Posterior vena cava (tissue), 2 donors: ENCODE measurements at regions of chr22 and their contacts with region 1.

Region 1: DNA sequence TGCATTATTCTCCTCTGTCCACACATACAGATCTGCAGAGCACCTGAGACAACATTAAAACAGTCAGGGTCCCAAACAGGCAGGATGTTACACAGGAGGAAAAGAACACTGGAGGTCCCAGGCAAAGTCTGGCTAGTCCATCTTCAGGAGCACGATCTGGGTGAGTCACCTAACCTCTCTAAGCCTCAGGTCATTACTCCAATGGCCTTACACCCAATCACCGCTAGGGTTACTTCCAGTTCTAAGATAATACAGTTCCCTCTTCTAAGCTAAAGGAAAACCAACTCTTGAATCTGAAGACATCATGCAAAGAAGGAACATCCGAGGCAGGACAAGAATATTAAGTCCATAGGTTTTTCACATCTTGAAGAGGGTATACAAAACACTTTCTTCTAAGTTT is 24.5 kb downstream of the ASCC2 start:
- DNase-seq: no peak

Region 2: DNA sequence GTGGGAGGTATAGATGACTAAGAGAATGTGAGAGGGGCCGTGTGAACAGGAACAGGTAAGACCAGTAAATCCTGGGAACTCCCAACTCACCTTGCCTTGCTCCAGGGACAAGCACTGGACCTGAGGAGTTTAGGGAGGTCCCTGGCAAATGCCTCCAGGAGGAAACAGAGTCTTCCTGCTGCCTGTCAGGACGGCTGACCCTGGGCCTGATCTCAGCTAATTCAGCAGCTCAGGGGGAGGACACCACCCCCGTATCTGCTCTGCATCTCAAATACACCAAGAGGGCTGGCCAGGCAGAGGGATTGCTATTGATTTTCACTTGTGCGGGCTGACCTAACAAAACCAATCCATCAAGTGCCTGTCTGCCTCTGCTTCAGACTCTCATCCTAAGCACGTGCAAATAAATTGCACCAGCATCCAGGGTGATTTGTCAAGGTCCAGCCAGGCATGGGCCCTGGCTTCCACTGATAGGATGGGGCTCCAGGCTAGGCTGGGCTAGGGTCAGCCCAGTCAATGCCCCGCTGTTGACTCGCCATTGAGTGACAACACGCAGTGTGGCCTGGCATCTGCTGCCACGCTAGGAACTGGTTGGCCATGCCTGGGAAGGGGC is 26.1 kb before region 1 on chr22:
- intact Hi-C with region 1: no loop called
- DNase-seq: no peak

Region 3: GRCh38 chr22:30212363-30212995 is 398.9 kb after region 1 on chr22:
- intact Hi-C with region 1: no loop called
- DNase-seq: peak; percentile 94

Region 4: DNA sequence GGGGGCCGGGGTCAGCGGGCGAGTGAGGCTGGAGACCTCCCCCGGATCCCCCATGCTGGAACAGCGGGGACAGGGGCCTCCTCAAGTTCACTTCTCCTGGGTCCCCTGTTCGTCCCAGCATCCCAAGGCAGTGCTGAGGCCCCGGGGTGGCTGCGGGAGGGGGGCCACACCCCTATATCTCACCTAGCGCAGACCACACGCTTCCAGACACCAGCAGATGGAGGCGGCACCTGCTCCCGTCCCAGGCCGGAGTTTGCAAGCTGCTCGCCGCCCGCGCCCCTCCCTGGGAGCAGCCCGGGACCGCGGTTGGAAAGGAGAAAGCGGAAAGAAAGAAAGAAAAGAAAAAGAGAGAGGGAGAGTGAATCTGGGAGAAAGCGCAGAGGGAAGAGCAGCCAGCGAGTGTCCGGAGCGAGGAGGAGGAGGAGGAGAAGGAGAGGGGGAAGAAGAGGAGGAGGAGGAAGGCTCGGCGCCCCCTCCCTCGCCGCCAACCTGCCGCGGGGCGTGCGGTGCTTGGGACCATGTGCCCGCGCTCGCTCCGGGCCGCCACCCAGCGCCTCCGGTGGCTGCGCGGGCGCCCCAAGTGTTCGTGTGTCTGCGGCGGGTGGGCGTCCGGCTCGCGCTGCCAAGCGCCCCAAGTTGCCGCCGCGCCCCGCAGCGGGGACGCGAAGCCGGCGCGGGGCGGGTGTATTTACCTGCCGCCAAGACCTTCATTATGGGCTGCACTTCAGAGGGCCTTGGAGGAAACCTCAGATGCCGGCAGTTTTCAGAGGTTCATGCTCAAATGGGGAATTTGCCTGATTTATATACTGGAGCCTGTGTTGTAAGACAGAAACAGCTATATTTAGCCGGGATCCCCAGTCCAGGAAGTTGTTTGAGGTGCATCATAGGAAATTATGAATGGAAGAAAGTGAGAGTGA is 432.7 kb after region 1 on chr22 and contains the start of gene LIF:
- intact Hi-C with region 1: loop called in 1 of 2 experiments (anchors 10 kb)
- DNase-seq: no peak
- total RNA-seq, gene LIF: 2.6 to 8.1 TPM